ENCODE measurements at regions of chr3 and their contacts with region 1.

Region 1: GRCh38 chr3:146638718-146639117 is 33.6 kb upstream of the PLSCR5 start:
- DNase-seq: no peak

Region 2: GRCh38 chr3:146449076-146449475 is 189.6 kb before region 1 on chr3:
- intact Hi-C with region 1: no loop called
- DNase-seq: no peak

Region 3: DNA sequence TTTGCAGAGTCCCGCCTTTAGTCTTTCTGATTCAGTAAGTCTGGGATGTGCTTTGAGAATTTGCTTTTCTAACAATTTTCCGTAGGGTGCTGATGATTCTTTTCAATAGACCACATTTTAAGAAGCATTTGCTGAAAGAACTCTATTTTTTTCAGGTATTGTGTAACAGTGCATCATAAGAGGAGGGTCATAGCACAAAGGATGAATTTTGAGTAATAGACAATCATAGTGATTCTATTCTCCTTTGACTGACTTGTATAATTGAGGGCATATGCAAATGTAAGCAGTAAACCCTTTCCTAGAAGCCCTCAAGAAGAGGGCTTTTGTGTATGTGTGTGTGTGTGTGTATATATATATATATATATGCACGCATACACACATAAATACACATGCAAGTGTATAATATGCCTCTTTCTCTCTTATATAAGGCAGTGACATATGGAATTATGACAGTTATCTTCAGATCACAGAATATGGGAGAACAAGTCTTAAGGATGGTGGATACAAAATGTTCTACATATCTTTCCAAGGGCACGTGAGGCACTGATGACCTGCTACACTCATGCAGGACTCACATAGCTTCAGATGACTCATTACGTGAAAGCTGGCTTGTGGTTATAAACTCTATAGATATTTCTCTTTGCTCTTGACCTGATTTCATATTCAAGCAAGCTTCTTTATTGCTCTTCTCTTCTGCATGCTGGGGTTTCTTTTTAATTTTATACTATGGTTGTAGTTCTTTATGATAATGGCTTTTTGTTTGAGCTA is 87.8 kb before region 1 on chr3:
- intact Hi-C with region 1: no loop called
- DNase-seq: no peak

Region 4: GRCh38 chr3:146605106-146605505 is 33.6 kb before region 1 on chr3 and contains the start of gene PLSCR5:
- intact Hi-C with region 1: no loop called
- DNase-seq: no peak
- total RNA-seq, gene PLSCR5: not detected

Region 5: DNA sequence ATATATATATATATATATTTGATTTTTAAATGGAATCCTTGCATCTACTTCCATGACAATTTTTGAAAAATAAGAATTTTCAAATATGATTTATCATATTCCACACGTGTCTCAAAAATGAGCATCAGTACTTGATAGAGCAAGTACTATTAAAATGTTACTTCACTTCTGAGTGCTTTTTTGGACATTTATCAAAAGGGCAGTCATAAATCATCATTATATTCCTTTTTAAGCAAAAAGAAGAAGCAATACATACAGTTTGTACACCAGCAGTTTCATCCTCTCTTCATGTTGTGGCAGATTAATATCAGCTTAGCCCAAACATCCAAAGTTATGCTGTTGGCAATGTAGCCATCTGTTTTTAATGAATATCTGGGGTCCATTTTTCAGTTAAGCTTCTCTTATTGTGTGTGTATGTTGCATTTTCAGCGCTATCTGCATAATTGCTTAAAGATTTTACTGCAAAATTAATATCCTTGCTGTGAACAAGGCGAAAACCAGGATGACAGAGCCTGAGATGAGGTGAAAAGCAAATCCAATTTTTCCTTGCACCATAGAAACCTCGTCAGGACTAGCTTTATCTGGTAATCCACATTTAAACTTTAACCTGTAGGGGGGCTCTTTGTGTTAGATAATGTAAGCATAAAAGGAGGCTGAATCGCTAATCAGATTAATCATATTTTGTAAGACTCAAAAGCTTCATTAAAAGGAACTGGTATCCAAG is 1454.1 kb after region 1 on chr3:
- intact Hi-C with region 1: loop called in 1 of 2 experiments (anchors 5 kb)
- DNase-seq: no peak